A673 (cell line): ENCODE measurements at regions of chr9 and their contacts with region 1.

Region 1: DNA sequence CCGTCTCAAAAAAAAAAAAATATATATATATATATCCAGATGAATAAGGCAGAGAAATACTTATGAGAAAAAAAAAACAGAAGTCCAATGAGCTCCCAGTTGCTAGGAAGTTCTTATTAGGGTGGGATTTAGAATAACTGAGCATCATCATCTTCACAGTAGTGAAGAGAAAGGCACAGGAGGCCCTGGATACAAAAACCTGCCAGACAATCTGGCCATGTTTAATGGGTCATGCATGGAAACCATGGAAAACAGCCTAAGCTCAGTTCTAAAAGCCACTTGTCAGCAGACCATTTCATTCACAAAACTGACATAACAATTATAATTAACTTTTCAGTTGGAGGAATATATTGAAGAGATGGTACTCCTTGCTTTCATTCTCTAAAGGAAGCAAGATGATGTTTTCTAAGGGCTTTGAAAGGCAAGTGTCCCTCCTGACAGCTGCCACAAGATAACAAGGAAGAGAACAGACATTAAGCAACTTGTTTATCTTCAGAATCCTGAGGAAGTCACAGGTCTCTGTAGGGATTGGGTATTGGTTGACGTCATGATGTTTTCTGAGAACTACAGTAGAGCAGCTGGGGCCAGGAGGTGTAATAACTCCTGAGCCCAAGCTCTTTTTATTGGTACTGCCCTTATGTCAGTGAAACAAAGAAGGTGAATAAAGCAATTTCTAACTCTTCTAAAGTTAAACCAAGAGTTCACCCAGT is 463.1 kb downstream of the DMAC1 start:
- DNase-seq: no peak
- H3K4me3 ChIP-seq: no peak overlapping the region
- H3K27ac ChIP-seq: no peak overlapping the region
- H3K4me1 ChIP-seq: peaks cover 26% of the 10 kb centered on the region
- H3K27me3 ChIP-seq: no peaks in the 10 kb centered on the region
- CTCF ChIP-seq: no peak

Region 2: DNA sequence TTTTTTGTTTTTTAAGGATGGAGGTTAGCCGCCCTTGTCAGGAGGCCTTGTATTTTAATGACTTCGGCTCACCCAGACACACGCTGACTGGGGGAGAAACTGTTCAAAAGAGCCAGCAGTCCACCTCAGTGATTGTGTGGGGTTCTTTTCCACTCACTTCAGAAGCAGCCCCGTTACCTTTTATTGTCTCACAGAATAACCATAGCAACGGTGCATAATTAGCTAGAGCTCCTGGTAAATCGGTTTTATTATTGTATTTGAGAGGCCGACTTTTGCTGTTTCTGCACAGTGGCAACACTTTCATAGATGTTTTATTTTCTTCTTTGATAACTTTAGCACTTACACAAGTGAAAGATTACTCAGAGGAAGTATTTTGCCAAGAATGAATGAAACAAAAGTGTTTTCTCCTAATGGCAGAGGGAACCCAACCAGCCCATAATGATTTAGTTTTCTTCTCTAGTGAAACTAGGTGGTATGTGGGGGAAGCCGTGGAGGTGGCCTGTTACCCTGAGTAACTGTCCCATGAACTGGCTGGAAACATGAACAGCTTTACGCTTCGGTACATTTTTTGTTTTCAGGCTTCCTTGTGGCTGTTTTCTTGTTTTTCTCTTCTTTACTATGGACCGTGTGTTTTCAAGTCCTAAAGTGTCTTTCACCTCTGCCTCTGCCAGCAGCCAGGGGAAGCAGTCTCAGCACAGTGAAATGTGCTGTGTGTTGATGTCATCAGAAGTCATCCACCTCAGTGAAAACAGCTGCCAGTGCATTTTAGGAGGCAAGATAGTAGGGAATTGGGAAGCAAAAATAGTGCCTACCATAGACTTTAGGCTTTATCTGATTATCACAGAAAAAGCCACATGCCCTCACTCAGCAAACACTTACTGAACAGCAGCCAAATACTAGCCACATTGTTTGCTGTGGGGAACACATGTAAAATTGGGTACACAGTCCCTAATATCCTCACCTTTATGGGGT is 164.1 kb before region 1 on chr9:
- CTCF ChIA-PET with region 1: no interaction called
- POLR2A ChIA-PET with region 1: no interaction called
- intact Hi-C with region 1: loop called (anchors 10 kb)
- DNase-seq: no peak
- H3K4me3 ChIP-seq: no peak overlapping the region
- H3K27ac ChIP-seq: no peak overlapping the region
- H3K4me1 ChIP-seq: no peaks in the 10 kb centered on the region
- H3K27me3 ChIP-seq: no peaks in the 10 kb centered on the region
- CTCF ChIP-seq: no peak

Region 3: DNA sequence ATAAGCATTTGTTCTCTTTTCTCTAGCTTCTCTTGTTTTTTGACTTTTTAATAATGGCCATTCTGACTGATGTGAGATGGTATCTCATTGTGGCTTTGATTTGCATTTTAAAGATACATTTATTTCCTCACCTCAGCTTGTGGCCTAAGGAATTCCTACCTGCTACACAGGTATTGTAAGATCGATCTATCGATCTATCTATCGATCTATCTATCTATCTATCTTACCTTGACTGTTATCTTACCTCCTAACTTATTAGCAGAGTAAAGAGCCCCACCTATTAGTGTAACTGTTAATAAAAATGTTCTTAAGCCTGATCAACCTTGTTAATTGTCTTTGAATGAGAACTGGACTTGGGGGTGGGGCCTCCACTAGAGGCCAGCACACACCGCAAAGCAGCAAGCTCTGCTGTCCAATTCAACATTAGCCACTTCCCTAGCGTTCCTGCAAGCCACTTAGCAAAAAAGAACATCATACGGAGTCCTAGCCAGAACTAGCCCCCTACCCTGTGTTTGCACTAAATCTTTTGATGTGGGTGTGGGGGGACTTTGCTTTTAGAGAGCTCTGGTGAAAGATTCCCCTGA is 63.0 kb before region 1 on chr9:
- CTCF ChIA-PET with region 1: no interaction called
- POLR2A ChIA-PET with region 1: no interaction called
- intact Hi-C with region 1: loop called (anchors 5 kb)
- DNase-seq: peak; percentile 27
- H3K4me3 ChIP-seq: no peak overlapping the region
- H3K27ac ChIP-seq: no peak overlapping the region
- H3K4me1 ChIP-seq: no peaks in the 10 kb centered on the region
- H3K27me3 ChIP-seq: peaks cover 31% of the 10 kb centered on the region
- CTCF ChIP-seq: peak; percentile 51

Region 4: GRCh38 chr9:7862170-7862569 is 525.7 kb after region 1 on chr9:
- CTCF ChIA-PET with region 1: no interaction called
- POLR2A ChIA-PET with region 1: no interaction called
- intact Hi-C with region 1: no loop called
- DNase-seq: no peak
- H3K4me3 ChIP-seq: no peak overlapping the region
- H3K27ac ChIP-seq: no peak overlapping the region
- H3K4me1 ChIP-seq: no peaks in the 10 kb centered on the region
- H3K27me3 ChIP-seq: no peaks in the 10 kb centered on the region
- CTCF ChIP-seq: no peak